Posterior vena cava (tissue), 2 donors: ENCODE measurements at regions of chr17 and their contacts with region 1.

Region 1: GRCh38 chr17:32909787-32910369 is 18.1 kb upstream of the TMEM98 start:
- DNase-seq: no peak

Region 2: DNA sequence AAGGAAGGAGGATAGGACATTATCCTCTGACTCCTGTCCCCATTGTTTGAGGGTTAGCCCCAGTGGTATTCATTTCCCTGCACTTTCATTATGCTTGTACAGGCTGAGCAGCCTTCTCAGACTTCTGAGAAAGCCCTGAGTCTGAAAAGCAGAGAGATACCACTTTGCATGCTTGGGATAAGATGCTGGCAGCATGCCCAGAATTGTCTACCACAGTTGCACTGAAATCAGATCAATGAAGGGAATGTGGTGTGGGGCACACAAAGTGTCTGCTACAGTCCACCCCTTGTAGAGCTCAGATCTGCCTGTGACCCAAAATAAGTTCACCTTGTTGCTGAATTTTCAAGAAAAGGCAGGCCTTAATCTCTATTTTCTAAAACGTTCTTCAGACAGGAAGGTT is 1890.8 kb after region 1 on chr17:
- intact Hi-C with region 1: loop called in 1 of 2 experiments (anchors 5 kb)
- DNase-seq: no peak